PC-9 (cell line): ENCODE measurements at regions of chr18 and their contacts with region 1.

Region 1: GRCh38 chr18:54671291-54671881 is 80.3 kb downstream of the DYNAP start:
- DNase-seq: peak in 1 of 2 experiments; percentile 61
- H3K4me3 ChIP-seq: no peak overlapping the region
- H3K27ac ChIP-seq: 0 out of 2 replicates have a peak overlapping the region, but pooled peaks have one; percentile 89
- H3K4me1 ChIP-seq: peaks cover 36% of the 10 kb centered on the region
- H3K27me3 ChIP-seq: no peaks in the 10 kb centered on the region
- CTCF ChIP-seq: peak; percentile 82

Region 2: GRCh38 chr18:54392543-54393023 is 278.8 kb before region 1 on chr18:
- CTCF ChIA-PET with region 1: no interaction called
- POLR2A ChIA-PET with region 1: no interaction called
- intact Hi-C with region 1: loop called (anchors 1 kb)
- DNase-seq: peak in 1 of 2 experiments; percentile 56
- H3K4me3 ChIP-seq: no peak overlapping the region
- H3K27ac ChIP-seq: no peak overlapping the region
- H3K4me1 ChIP-seq: peaks cover 20% of the 10 kb centered on the region
- H3K27me3 ChIP-seq: no peaks in the 10 kb centered on the region
- CTCF ChIP-seq: peak; percentile 82

Region 3: DNA sequence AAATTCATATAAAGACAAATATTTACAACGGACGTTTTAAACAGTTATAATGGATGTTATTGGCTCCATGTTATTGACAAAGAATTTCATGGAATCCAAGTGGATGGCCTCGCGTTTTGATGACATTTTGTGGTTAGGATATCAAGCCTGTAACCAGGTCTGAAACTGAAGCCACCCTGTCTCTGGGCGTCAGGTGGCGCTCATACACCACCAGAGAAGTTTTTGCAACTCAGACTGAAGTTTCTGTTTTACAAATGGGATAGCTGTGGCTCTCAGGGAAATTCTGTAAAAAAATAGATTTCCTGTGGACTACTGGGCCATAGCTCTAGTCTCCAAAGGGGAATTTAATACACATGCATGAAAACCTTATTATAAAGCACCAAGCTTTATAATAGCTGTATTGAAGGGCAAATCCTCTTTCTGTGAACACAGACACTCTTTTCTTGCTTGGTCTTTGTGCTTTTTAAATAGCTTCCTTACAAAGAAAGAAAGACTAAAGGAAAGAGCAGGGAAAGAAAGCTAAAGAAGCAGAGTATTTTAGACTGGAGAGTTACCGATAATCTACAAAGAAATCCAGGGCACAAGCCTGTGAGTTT is 227.0 kb before region 1 on chr18:
- CTCF ChIA-PET with region 1: interaction called, 3 read pairs
- POLR2A ChIA-PET with region 1: no interaction called
- intact Hi-C with region 1: loop called (anchors 1 kb)
- DNase-seq: peak; percentile 40 to 55
- H3K4me3 ChIP-seq: no peak overlapping the region
- H3K27ac ChIP-seq: no peak overlapping the region
- H3K4me1 ChIP-seq: no peaks in the 10 kb centered on the region
- H3K27me3 ChIP-seq: no peaks in the 10 kb centered on the region
- CTCF ChIP-seq: peak; percentile 86

Region 4: DNA sequence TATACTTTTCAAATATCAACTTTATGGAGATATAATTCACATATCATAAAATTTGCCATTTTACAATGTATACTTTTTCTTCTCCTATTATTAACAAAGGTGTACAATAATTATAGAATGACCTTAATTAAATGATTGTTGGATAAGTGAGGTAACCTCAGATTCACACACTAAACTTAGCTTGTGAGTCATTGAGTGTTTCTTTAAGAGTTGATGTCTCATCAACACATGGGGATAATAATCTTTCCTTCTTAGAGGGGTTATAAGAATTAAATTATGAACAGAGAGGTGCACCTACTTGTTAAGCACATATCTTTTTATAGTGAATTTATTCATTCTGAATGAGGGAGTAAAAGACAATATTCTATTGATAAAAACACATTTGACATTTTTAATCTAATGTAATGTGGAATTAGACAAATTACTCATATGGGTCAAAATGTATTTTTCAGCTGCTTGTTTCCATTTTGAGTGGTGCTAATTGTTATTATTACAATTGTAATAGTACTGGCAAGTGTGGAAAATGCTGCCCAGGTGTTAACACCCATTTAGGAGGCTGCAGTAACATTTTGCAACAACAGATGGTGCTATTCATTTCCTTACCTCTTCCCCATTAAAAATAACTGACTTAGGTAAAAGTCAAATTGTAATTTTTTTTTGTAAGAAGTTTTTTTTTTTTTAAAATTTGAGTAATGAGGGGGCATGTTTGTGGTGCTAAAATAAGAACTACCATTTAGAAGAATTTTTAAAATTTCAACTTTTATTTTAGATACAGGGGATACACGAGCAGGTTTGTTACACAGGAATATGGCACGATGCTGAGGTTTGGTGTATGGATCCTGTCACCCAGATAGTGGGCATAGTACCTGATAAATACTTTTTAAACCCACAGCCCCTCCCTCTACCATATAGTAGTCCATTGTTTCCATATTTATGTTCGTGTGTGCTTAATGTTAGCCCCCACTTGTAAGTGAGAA is 112.5 kb before region 1 on chr18:
- CTCF ChIA-PET with region 1: no interaction called
- POLR2A ChIA-PET with region 1: no interaction called
- intact Hi-C with region 1: loop called (anchors 1 kb)
- DNase-seq: no peak
- H3K4me3 ChIP-seq: no peak overlapping the region
- H3K27ac ChIP-seq: no peak overlapping the region
- H3K4me1 ChIP-seq: no peaks in the 10 kb centered on the region
- H3K27me3 ChIP-seq: no peaks in the 10 kb centered on the region
- CTCF ChIP-seq: peak; percentile 82